CD4-positive, alpha-beta memory T cell (primary cell): ENCODE measurements at regions of chr16 and their contacts with region 1.

Region 1: DNA sequence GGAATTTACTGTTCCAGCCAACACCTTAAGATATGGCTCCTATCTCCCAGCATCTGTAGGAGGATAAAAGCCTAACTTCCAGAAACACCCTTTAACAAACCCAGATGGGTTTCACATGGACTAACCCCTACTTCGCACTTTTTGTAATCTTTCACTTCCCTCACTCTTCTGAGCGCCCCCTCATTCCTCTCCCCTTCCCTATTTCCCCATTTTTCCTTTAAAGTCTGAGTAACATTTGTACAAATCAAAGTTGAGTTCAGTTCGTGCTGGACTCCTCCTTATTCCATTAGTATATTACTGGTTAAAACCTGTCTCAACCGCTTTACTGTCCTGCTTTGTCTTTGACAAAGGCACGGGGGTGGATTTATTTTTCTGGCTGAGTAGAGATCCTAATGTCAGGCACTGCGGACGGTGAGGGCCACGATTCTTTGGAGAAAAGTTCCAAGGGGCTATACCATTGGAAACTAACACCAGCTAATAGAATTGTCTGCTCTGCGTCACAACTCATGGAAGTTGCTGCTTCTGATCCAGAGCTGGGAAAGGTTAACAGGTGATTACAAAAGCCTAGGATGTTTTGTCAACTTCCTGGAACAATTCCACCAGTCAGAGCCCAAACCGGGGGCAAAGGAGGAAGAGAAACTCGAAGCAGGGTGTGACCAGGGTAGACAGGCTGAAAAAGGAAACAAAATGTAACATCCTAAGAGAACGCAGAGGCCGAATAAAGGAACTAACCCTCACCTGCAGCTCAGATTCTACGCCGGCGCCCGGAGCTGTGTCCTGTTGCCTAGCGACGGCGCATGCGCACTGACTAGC is 12.5 kb downstream of the TAT start:
- DNase-seq: no peak
- H3K4me3 ChIP-seq: peak overlapping the region; percentile 7 to 61
- H3K4me3 Mint-ChIP-seq: peak overlapping the region; percentile 89 to 96 (median 93)
- H3K27ac ChIP-seq: peak overlapping the region; percentile 69
- H3K27ac Mint-ChIP-seq: peak overlapping the region; percentile 90 to 99 (median 96)
- H3K4me1 ChIP-seq: peaks cover 12% of the 10 kb centered on the region
- H3K4me1 Mint-ChIP-seq: peaks cover 11 to 21% (median 17%) of the 10 kb centered on the region in 4 donors
- H3K27me3 ChIP-seq: no peaks in the 10 kb centered on the region
- H3K27me3 Mint-ChIP-seq: no peaks in the 10 kb centered on the region

Region 2: DNA sequence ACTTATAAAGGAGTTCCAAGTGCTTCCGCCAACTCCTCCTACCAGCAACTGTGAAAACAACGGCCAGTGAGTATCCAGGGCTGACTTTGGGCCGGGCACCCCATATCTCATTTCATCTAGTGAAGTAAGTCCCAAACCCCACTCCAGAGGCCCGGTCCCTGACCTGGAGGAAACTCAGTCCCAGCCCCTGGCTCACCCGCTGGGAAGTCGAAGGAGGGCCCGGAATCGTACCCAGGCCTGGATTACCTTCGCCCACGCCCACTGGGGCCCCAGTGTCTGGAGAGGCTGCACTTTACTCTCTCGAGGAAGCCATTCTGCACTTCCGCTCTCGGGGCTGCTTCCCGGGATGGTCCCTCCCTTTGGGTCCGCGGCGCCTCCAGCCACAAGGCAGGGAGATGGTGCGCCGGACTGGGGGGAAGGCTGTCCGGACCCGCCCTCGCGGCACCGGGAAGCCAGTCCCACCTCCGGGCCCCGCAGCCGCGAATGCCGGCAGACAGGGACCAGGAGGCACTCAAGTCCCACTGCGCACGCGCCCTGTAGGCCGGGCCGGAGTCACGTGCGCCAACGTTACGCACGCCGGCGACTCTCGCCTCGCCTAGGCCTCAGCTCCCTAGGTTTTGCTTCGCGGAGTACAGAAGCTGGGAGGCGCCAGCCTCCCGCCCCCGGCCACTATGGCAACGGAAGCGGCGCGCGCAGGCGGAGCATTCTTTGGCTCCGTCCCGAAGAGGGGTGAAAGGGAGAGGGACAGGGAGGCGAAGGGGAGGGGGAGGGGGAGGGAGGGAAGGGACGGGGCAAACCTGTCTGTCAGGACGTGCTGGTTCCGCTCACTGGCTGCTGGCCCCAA is 275.2 kb before region 1 on chr16 and contains the start of gene CMTR2:
- CTCF ChIA-PET with region 1: no interaction called
- POLR2A ChIA-PET with region 1: no interaction called
- intact Hi-C with region 1: loop called (anchors 5 kb)
- DNase-seq: peak; percentile 83 to 90 (median 88)
- H3K4me3 ChIP-seq: peak within 1 kb of the TSS; percentile 30 to 93
- H3K4me3 Mint-ChIP-seq: peak within 1 kb of the TSS; percentile 83 to 92 (median 90)
- H3K27ac ChIP-seq: peak within 1 kb of the TSS; percentile 78
- H3K27ac Mint-ChIP-seq: peak within 1 kb of the TSS; percentile 83 to 96 (median 94)
- H3K4me1 ChIP-seq: peaks cover 20% of the 10 kb centered on the region
- H3K4me1 Mint-ChIP-seq: peaks cover 19 to 37% (median 21%) of the 10 kb centered on the region in 4 donors
- H3K27me3 ChIP-seq: no peaks in the 10 kb centered on the region
- H3K27me3 Mint-ChIP-seq: peaks cover 7 to 14% of the 10 kb centered on the region in 2 donors
- total RNA-seq, gene CMTR2: 27.3 to 28.5 TPM

Region 3: GRCh38 chr16:71499775-71500364 is 64.5 kb before region 1 on chr16:
- CTCF ChIA-PET with region 1: interaction called, 10 read pairs
- POLR2A ChIA-PET with region 1: no interaction called
- intact Hi-C with region 1: no loop called
- DNase-seq: peak; percentile 50 to 64 (median 56)
- H3K4me3 ChIP-seq: no peak overlapping the region
- H3K4me3 Mint-ChIP-seq: no peak overlapping the region
- H3K27ac ChIP-seq: no peak overlapping the region
- H3K27ac Mint-ChIP-seq: no peak overlapping the region
- H3K4me1 ChIP-seq: no peaks in the 10 kb centered on the region
- H3K4me1 Mint-ChIP-seq: no peaks in the 10 kb centered on the region
- H3K27me3 ChIP-seq: no peaks in the 10 kb centered on the region
- H3K27me3 Mint-ChIP-seq: peaks cover 7 to 11% of the 10 kb centered on the region in 2 donors

Region 4: DNA sequence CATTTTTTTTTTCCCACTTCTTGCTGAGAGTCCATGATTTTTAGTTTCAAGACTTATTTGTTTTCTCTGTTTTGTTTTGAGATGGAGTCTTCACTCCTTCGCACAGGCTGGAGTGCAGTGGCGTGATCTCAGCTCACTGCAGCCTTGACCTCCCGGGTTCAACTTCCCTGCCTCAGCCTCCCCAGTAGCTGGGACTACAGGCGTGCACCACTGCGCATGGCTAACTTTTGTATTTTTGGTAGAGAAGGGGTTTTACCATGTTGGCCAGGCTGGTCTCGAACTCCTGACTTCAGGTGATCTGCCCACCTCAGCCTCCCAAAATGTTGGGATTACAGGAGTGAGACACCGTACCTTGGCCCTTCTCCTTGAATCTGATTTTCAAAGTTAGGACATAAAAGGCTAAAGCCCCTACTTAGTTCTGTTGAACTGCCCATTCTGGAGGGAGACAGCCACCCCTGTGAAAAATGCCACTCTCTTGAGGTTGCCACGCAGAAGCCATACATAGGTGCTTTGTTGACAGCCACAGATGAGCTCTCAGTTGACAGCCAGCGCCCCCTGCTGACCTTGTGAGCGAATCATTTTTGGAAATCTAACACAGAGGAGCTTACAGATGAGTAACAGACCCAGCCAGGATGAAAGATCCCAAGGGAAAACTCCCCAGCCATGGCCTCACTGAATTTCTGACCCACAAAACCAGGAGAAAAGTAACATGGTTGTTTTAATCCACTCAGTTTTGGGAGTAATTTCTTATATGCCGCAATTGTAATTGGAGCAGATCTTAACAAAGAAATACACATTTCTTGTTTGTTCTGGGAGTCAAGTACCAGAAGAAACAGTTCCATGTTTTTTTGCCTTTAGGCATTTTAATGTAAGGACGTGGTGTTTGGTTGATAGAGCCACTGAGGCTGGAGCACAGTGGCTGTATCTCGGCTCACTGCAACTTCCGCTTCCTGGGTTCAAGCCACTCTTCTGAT is 397.0 kb after region 1 on chr16:
- CTCF ChIA-PET with region 1: interaction called, 18 read pairs
- POLR2A ChIA-PET with region 1: interaction called, 4 read pairs
- intact Hi-C with region 1: loop called (anchors 2 kb)
- DNase-seq: peak; percentile 69 to 75 (median 70)
- H3K4me3 ChIP-seq: no peak overlapping the region
- H3K4me3 Mint-ChIP-seq: no peak overlapping the region
- H3K27ac ChIP-seq: no peak overlapping the region
- H3K27ac Mint-ChIP-seq: peak overlapping the region in 1 of 7 donors; percentile 43
- H3K4me1 ChIP-seq: peaks cover 5% of the 10 kb centered on the region
- H3K4me1 Mint-ChIP-seq: peaks cover 5 to 9% (median 6%) of the 10 kb centered on the region in 4 donors
- H3K27me3 ChIP-seq: no peaks in the 10 kb centered on the region
- H3K27me3 Mint-ChIP-seq: peaks cover 0 to 3% of the 10 kb centered on the region in 2 donors

Region 5: GRCh38 chr16:72093448-72094265 is 529.3 kb after region 1 on chr16 and contains the starts of genes DHX38 and TXNL4B:
- CTCF ChIA-PET with region 1: interaction called, 3 read pairs
- POLR2A ChIA-PET with region 1: interaction called, 9 read pairs
- intact Hi-C with region 1: loop called (anchors 5 kb)
- DNase-seq: peak; percentile 92 to 97 (median 94)
- H3K4me3 ChIP-seq: peak within 1 kb of the TSS; percentile 82 to 88
- H3K4me3 Mint-ChIP-seq: peak within 1 kb of the TSS; percentile 97 to 100 (median 100)
- H3K27ac ChIP-seq: peak within 1 kb of the TSS; percentile 90
- H3K27ac Mint-ChIP-seq: peak within 1 kb of the TSS; percentile 90 to 100 (median 100)
- H3K4me1 ChIP-seq: peaks cover 43% of the 10 kb centered on the region
- H3K4me1 Mint-ChIP-seq: peaks cover 39 to 62% (median 47%) of the 10 kb centered on the region in 4 donors
- H3K27me3 ChIP-seq: no peaks in the 10 kb centered on the region
- H3K27me3 Mint-ChIP-seq: no peaks in the 10 kb centered on the region
- total RNA-seq, gene DHX38: 109 to 120 TPM
- total RNA-seq, gene TXNL4B: 23.7 to 26.1 TPM